ENCODE measurements at regions of chr1 and their contacts with region 1.

Region 1: DNA sequence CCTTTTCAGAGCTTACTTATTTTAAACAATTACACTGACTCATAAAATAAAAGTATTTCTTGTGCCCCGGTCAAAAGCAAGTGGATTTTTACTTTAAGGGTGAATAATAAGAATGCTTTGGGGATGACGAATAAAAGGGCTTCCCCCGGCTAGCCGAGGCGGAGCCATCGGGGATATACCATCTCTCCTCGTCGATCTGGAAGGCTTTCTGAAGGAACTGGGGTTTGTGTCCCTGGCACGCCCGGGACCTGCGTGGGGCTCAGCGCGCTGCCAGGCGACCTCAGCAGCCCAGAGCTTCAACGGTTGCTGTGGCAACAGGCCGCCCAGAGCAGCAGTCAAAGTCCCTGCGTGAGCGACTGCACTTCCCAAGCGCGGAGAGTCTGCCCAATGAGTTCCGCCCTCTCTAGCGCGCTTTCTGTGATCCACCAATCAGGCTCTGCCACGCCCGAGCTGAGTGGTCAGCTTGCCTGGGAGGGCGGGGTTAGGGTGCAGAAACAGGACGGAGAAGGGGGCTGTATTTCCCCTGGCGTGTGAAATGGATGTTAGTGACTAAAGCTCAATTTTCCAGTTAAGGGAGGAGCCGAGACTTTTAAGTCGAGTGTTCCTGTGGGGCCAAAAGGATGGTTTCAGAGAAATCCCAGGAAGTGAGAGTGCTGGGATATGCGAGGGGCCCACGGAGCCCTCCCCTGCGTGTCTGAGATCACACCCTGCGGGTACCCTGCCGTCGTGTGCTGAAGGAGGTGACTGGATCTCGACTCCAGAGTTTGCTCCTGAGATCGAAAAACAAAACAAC is 33.0 kb upstream of the MGST3 start:
- DNase-seq: peak; percentile 93 to 96
- H3K4me3 ChIP-seq: peak overlapping the region; percentile 64
- H3K4me3 Mint-ChIP-seq: peak overlapping the region; percentile 95
- H3K27ac Mint-ChIP-seq: peak overlapping the region; percentile 88
- H3K4me1 ChIP-seq: no peaks in the 10 kb centered on the region
- H3K4me1 Mint-ChIP-seq: peaks cover 20% of the 10 kb centered on the region
- H3K27me3 ChIP-seq: peaks cover 1% of the 10 kb centered on the region; the same call in 1 of the 2 replicates
- H3K27me3 Mint-ChIP-seq: peaks cover 7% of the 10 kb centered on the region
- CTCF ChIP-seq: no peak

Region 2: GRCh38 chr1:165129568-165130164 is 468.4 kb before region 1 on chr1:
- CTCF ChIA-PET with region 1: interaction called, 7 read pairs
- POLR2A ChIA-PET with region 1: no interaction called
- intact Hi-C with region 1: loop called (anchors 2 kb)
- DNase-seq: peak; percentile 81 to 84
- H3K4me3 ChIP-seq: no peak overlapping the region
- H3K4me3 Mint-ChIP-seq: no peak overlapping the region
- H3K27ac Mint-ChIP-seq: no peak overlapping the region
- H3K4me1 ChIP-seq: peaks cover 5% of the 10 kb centered on the region; the same call in 1 of the 2 replicates
- H3K4me1 Mint-ChIP-seq: peaks cover 12% of the 10 kb centered on the region
- H3K27me3 ChIP-seq: no peaks in the 10 kb centered on the region
- H3K27me3 Mint-ChIP-seq: no peaks in the 10 kb centered on the region
- CTCF ChIP-seq: peak; percentile 70 to 80

Region 3: GRCh38 chr1:165306541-165307434 is 291.3 kb before region 1 on chr1:
- CTCF ChIA-PET with region 1: no interaction called
- POLR2A ChIA-PET with region 1: no interaction called
- intact Hi-C with region 1: no loop called
- DNase-seq: no peak
- H3K4me3 ChIP-seq: no peak overlapping the region
- H3K4me3 Mint-ChIP-seq: no peak overlapping the region
- H3K27ac Mint-ChIP-seq: no peak overlapping the region
- H3K4me1 ChIP-seq: no peaks in the 10 kb centered on the region
- H3K4me1 Mint-ChIP-seq: no peaks in the 10 kb centered on the region
- H3K27me3 ChIP-seq: no peaks in the 10 kb centered on the region
- H3K27me3 Mint-ChIP-seq: peaks cover 6% of the 10 kb centered on the region
- CTCF ChIP-seq: no peak

Region 4: GRCh38 chr1:165392634-165393571 is 205.2 kb before region 1 on chr1:
- CTCF ChIA-PET with region 1: interaction called, 14 read pairs
- POLR2A ChIA-PET with region 1: no interaction called
- intact Hi-C with region 1: loop called (anchors 1 kb)
- DNase-seq: peak; percentile 72 to 73
- H3K4me3 ChIP-seq: no peak overlapping the region
- H3K4me3 Mint-ChIP-seq: no peak overlapping the region
- H3K27ac Mint-ChIP-seq: no peak overlapping the region
- H3K4me1 ChIP-seq: no peaks in the 10 kb centered on the region
- H3K4me1 Mint-ChIP-seq: no peaks in the 10 kb centered on the region
- H3K27me3 ChIP-seq: no peaks in the 10 kb centered on the region
- H3K27me3 Mint-ChIP-seq: peaks cover 15% of the 10 kb centered on the region
- CTCF ChIP-seq: peak; percentile 93

Region 5: GRCh38 chr1:165490175-165490574 is 107.9 kb before region 1 on chr1:
- CTCF ChIA-PET with region 1: no interaction called
- POLR2A ChIA-PET with region 1: no interaction called
- intact Hi-C with region 1: loop called (anchors 5 kb)
- DNase-seq: no peak
- H3K4me3 ChIP-seq: no peak overlapping the region
- H3K4me3 Mint-ChIP-seq: no peak overlapping the region
- H3K27ac Mint-ChIP-seq: no peak overlapping the region
- H3K4me1 ChIP-seq: no peaks in the 10 kb centered on the region
- H3K4me1 Mint-ChIP-seq: no peaks in the 10 kb centered on the region
- H3K27me3 ChIP-seq: no peaks in the 10 kb centered on the region
- H3K27me3 Mint-ChIP-seq: no peaks in the 10 kb centered on the region
- CTCF ChIP-seq: no peak

Region 6: GRCh38 chr1:165543532-165544495 is 54.3 kb before region 1 on chr1 and contains the start of gene LRRC52:
- CTCF ChIA-PET with region 1: no interaction called
- POLR2A ChIA-PET with region 1: no interaction called
- intact Hi-C with region 1: no loop called
- DNase-seq: no peak
- H3K4me3 ChIP-seq: no peak within 1 kb of the TSS
- H3K4me3 Mint-ChIP-seq: no peak within 1 kb of the TSS
- H3K27ac Mint-ChIP-seq: no peak within 1 kb of the TSS
- H3K4me1 ChIP-seq: no peaks in the 10 kb centered on the region
- H3K4me1 Mint-ChIP-seq: peaks cover 14% of the 10 kb centered on the region
- H3K27me3 ChIP-seq: no peaks in the 10 kb centered on the region
- H3K27me3 Mint-ChIP-seq: peaks cover 13% of the 10 kb centered on the region
- CTCF ChIP-seq: no peak
- total RNA-seq, gene LRRC52: not detected in 2 replicates

Region 7: DNA sequence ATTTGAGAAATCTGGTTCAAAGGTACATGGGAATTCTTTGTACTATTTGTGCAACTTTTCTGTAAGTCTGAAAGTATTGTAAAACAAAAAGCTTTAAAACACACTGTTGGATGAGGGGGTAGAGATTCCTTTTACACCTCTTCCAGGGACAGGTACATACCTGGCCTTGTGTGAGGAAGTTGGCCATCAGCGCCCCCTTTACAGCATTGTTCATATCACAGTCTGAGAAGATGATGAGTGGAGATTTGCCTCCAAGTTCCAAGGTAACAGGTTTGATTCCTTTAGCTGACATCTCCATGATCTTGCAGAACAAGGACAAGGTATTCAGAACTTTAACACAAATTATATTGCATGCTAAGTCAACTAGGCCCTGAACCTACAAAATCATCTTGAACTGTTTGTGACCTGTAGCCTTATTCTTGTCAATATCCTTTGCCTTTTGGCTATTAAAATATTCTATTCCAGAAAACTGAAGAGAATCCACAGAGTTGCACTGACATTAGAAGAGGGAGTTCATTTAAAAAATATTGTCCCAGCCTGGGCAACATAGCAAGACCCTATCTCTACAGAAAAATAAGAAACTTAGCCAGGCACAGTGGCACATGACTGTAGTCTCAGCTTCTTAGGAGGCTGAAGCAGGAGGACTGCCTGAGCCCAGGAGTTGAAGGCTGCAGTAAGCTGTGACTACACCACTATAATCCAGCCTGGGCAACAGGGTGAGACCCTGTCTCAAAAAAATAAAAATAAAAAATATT is 81.4 kb after region 1 on chr1:
- CTCF ChIA-PET with region 1: no interaction called
- POLR2A ChIA-PET with region 1: no interaction called
- intact Hi-C with region 1: loop called (anchors 1 kb)
- DNase-seq: no peak
- H3K4me3 ChIP-seq: no peak overlapping the region
- H3K4me3 Mint-ChIP-seq: no peak overlapping the region
- H3K27ac Mint-ChIP-seq: no peak overlapping the region
- H3K4me1 ChIP-seq: no peaks in the 10 kb centered on the region
- H3K4me1 Mint-ChIP-seq: no peaks in the 10 kb centered on the region
- H3K27me3 ChIP-seq: no peaks in the 10 kb centered on the region
- H3K27me3 Mint-ChIP-seq: no peaks in the 10 kb centered on the region
- CTCF ChIP-seq: peak in 1 of 2 experiments; percentile 3

Region 8: DNA sequence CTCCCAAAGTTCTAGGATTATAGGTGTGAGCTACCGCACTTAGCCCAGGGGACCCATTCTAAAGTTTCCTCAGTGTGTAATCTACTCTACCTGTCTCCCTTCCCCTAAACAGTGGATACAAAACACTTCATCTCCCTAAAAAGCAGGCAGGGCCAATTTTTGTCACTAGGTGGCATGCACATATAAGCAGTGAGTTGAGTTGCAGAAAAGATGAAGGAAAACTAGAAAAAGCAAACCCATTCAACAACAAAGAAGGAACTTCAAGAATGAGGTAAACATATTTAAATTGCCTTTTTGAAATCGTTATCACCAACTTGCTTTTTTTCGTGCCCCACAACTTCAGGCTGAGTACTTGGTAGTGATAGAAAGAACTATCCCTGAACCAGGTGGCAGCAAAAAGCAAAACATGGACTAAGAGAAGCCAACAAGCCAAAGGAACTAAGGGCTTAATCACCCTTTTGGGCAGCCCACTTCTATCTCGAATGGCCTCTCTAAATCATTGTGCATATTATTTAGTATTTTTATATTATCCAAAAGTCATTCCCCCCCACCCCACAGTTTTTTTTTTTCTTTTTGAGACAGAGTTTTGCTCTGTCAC is 119.9 kb after region 1 on chr1:
- CTCF ChIA-PET with region 1: no interaction called
- POLR2A ChIA-PET with region 1: no interaction called
- intact Hi-C with region 1: loop called (anchors 1 kb)
- DNase-seq: peak; percentile 57 to 65
- H3K4me3 ChIP-seq: no peak overlapping the region
- H3K4me3 Mint-ChIP-seq: no peak overlapping the region
- H3K27ac Mint-ChIP-seq: no peak overlapping the region
- H3K4me1 ChIP-seq: no peaks in the 10 kb centered on the region
- H3K4me1 Mint-ChIP-seq: no peaks in the 10 kb centered on the region
- H3K27me3 ChIP-seq: no peaks in the 10 kb centered on the region; the same call in 1 of the 2 replicates
- H3K27me3 Mint-ChIP-seq: no peaks in the 10 kb centered on the region
- CTCF ChIP-seq: peak; percentile 56 to 88

Region 9: DNA sequence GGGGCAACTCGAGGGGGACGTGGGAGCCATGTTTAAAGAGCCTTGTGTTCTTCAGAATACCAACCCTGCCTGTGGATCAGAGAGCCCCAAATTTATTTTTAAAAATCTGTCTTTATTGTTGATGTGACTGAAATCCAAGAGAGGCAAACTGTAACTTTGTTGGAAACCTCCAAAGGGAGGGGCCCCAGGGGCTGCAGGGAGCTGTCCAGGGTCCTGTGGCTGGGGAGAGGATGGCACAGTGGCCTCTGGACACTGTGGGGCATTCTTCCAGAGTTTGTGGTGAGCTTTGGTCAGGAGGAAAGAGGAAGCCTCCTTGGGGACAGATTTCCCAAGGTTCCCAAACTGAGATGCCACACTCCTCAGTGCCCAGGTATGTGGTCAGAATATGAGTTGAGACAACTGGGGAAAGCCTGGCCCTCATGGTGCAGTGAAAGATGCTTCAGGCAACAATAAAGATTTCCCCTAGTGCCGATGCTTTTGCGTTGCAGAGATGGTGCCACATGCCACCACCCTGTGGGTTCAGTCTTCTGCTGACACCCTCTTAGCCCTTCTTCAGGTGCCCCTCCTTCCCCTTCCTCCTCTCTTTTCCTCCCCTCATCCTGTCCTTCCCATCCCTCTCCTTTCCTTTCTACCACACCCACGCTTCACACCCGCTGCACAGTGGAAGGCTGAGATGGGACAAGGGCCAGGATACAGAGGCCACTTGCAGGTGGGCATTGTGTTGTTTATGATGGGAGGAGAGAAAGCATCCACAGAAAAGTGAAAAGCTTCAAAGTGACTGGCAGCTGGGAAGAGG is 351.5 kb after region 1 on chr1:
- CTCF ChIA-PET with region 1: no interaction called
- POLR2A ChIA-PET with region 1: no interaction called
- intact Hi-C with region 1: no loop called
- DNase-seq: peak in 1 of 2 experiments; percentile 66
- H3K4me3 ChIP-seq: no peak overlapping the region
- H3K4me3 Mint-ChIP-seq: no peak overlapping the region
- H3K27ac Mint-ChIP-seq: no peak overlapping the region
- H3K4me1 ChIP-seq: no peaks in the 10 kb centered on the region
- H3K4me1 Mint-ChIP-seq: no peaks in the 10 kb centered on the region
- H3K27me3 ChIP-seq: no peaks in the 10 kb centered on the region
- H3K27me3 Mint-ChIP-seq: peaks cover 12% of the 10 kb centered on the region
- CTCF ChIP-seq: no peak

Region 10: DNA sequence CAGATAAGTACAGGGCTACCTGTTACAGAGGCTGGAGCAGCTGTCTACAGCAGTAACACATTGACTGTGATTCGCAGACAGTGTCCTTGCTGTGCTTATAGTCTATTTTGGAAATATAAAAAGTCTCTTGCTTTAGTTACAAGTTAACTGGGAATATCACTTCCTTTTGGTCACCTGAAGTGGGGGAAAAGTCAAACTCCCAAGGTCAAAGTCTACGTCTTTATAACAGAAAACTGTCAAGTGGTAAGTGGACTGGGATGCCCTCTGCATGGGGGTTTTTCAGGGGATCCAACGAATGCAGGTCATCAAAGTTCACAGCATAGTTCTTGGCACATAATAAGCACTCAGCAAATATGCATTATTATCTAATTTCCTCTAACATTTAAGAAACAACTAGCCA is 513.4 kb after region 1 on chr1:
- CTCF ChIA-PET with region 1: no interaction called
- POLR2A ChIA-PET with region 1: no interaction called
- intact Hi-C with region 1: no loop called
- DNase-seq: no peak
- H3K4me3 ChIP-seq: no peak overlapping the region
- H3K4me3 Mint-ChIP-seq: no peak overlapping the region
- H3K27ac Mint-ChIP-seq: no peak overlapping the region
- H3K4me1 ChIP-seq: no peaks in the 10 kb centered on the region
- H3K4me1 Mint-ChIP-seq: no peaks in the 10 kb centered on the region
- H3K27me3 ChIP-seq: no peaks in the 10 kb centered on the region; the same call in 1 of the 2 replicates
- H3K27me3 Mint-ChIP-seq: peaks cover 7% of the 10 kb centered on the region
- CTCF ChIP-seq: no peak

Measured in Caco-2 (cell line).